CD4-positive, alpha-beta T cell (primary cell): ENCODE measurements at regions of chr10 and their contacts with region 1.

Region 1: GRCh38 chr10:37857287-37858211 is at the start of gene ZNF248:
- DNase-seq: peak; percentile 88 to 99 (median 94)
- ATAC-seq: peak; percentile 94
- H3K4me3 ChIP-seq: peak within 1 kb of the TSS; percentile 98
- H3K4me3 Mint-ChIP-seq: peak within 1 kb of the TSS; percentile 97
- H3K27ac ChIP-seq: peak within 1 kb of the TSS; percentile 85 to 96
- H3K27ac Mint-ChIP-seq: peak within 1 kb of the TSS; percentile 96
- H3K4me1 ChIP-seq: peaks cover 15% of the 10 kb centered on the region
- H3K4me1 Mint-ChIP-seq: peaks cover 49% of the 10 kb centered on the region
- H3K27me3 ChIP-seq: no peaks in the 10 kb centered on the region
- H3K27me3 Mint-ChIP-seq: no peaks in the 10 kb centered on the region
- CTCF ChIP-seq: no peak
- total RNA-seq, gene ZNF248: 3.2 to 3.4 TPM

Region 2: GRCh38 chr10:38010119-38010903 is 152.8 kb after region 1 on chr10 and contains the start of gene ZNF33A:
- CTCF ChIA-PET with region 1: no interaction called
- POLR2A ChIA-PET with region 1: interaction called, 9 read pairs
- intact Hi-C with region 1: loop called (anchors 1 kb)
- DNase-seq: peak; percentile 83 to 97 (median 88)
- ATAC-seq: peak; percentile 82
- H3K4me3 ChIP-seq: peak within 1 kb of the TSS; percentile 57
- H3K4me3 Mint-ChIP-seq: peak within 1 kb of the TSS; percentile 93
- H3K27ac ChIP-seq: peak within 1 kb of the TSS; percentile 97 to 99
- H3K27ac Mint-ChIP-seq: peak within 1 kb of the TSS; percentile 99
- H3K4me1 ChIP-seq: peaks cover 32% of the 10 kb centered on the region
- H3K4me1 Mint-ChIP-seq: peaks cover 45% of the 10 kb centered on the region
- H3K27me3 ChIP-seq: no peaks in the 10 kb centered on the region
- H3K27me3 Mint-ChIP-seq: no peaks in the 10 kb centered on the region
- CTCF ChIP-seq: no peak
- total RNA-seq, gene ZNF33A: 25.9 to 30.3 TPM